ENCODE measurements at regions of chr11 and their contacts with region 1.

Region 1: GRCh38 chr11:62841361-62842184 is 2.2 kb upstream of the WDR74 start:
- DNase-seq: peak; percentile 54 to 94 (median 86)
- ATAC-seq: peak; percentile 57 to 61
- H3K4me3 Mint-ChIP-seq: no peak overlapping the region
- H3K27ac Mint-ChIP-seq: no peak overlapping the region
- H3K4me1 Mint-ChIP-seq: peaks cover 13 to 31% (median 25%) of the 10 kb centered on the region in 4 donors
- H3K27me3 Mint-ChIP-seq: no peaks in the 10 kb centered on the region

Region 2: GRCh38 chr11:62612366-62613290 is 228.9 kb before region 1 on chr11 and contains the starts of genes EML3 and ROM1:
- POLR2A ChIA-PET with region 1: interaction called, 23 read pairs
- DNase-seq: peak; percentile 79 to 94 (median 88)
- ATAC-seq: peak; percentile 74 to 78
- H3K4me3 Mint-ChIP-seq: peak within 1 kb of the TSS; percentile 91 to 98 (median 94)
- H3K27ac Mint-ChIP-seq: peak within 1 kb of the TSS; percentile 96 to 99 (median 98)
- H3K4me1 Mint-ChIP-seq: peaks cover 32 to 59% (median 57%) of the 10 kb centered on the region in 4 donors
- H3K27me3 Mint-ChIP-seq: no peaks in the 10 kb centered on the region
- polyA plus RNA-seq, gene EML3: 14.8 to 23.7 (median 15.7) TPM
- polyA plus RNA-seq, gene ROM1: 0.82 to 1.9 (median 1.8) TPM

Region 3: GRCh38 chr11:62753736-62754603 is 87.6 kb before region 1 on chr11 and contains the start of gene ZBTB3:
- POLR2A ChIA-PET with region 1: interaction called, 103 read pairs
- DNase-seq: peak; percentile 93 to 100 (median 96)
- ATAC-seq: peak; percentile 95 to 96
- H3K4me3 Mint-ChIP-seq: peak within 1 kb of the TSS; percentile 91 to 100 (median 97)
- H3K27ac Mint-ChIP-seq: peak within 1 kb of the TSS; percentile 88 to 100 (median 99)
- H3K4me1 Mint-ChIP-seq: peaks cover 8 to 43% (median 28%) of the 10 kb centered on the region in 4 donors
- H3K27me3 Mint-ChIP-seq: no peaks in the 10 kb centered on the region
- polyA plus RNA-seq, gene ZBTB3: 2.1 to 6.7 (median 3.6) TPM

Region 4: GRCh38 chr11:62787005-62787759 is 54.4 kb before region 1 on chr11 and contains the start of gene TMEM179B:
- POLR2A ChIA-PET with region 1: interaction called, 314 read pairs
- DNase-seq: peak; percentile 90 to 99 (median 97)
- ATAC-seq: peak; percentile 69 to 73
- H3K4me3 Mint-ChIP-seq: peak within 1 kb of the TSS; percentile 90 to 96 (median 96)
- H3K27ac Mint-ChIP-seq: peak within 1 kb of the TSS; percentile 92 to 98 (median 96)
- H3K4me1 Mint-ChIP-seq: peaks cover 14 to 53% (median 46%) of the 10 kb centered on the region in 4 donors
- H3K27me3 Mint-ChIP-seq: no peaks in the 10 kb centered on the region
- polyA plus RNA-seq, gene TMEM179B: 109 to 126 (median 122) TPM

Region 5: DNA sequence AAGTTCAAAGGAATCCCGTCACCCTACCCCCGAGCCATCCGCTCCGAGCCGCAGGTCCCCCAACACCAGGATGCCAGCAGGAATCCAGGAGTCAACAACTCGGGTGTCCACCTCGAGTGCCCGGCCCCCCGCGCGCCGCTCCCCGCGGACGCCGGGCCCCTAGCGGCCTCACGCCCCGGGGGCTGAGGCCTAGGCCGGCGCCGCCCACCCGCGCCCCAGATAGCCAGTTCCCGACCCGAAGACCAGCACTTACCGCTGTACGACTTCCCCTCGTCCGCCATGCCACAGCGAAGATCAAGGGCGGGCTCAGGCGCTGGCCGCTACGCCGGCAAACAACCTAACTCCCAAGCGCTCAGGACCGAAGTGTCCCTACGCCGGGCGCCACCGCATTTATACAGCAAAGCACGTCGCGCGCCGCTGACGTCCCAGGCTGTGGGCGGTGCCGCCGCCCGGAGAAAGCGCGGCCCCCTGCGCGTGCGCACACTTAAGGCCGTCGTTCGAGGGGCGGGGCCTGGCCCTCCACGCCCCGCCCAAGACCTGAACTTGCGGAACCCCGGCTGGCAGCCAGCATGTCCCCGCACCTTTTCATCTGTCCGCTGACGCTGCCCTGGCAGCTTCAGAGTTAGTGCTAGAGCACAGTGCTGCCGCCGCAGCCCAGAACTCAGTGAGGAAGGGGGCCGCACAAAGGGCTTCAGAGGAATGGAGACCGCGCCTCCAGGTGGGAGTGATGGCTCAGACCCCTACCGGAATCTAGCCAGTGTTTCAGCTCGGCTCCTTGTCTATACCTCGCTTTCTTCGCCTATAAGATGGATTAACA is 36.3 kb before region 1 on chr11 and contains the start of gene NXF1:
- POLR2A ChIA-PET with region 1: interaction called, 45 read pairs
- DNase-seq: peak; percentile 90 to 98 (median 97)
- ATAC-seq: peak; percentile 85 to 86
- H3K4me3 Mint-ChIP-seq: peak within 1 kb of the TSS; percentile 93 to 100 (median 99)
- H3K27ac Mint-ChIP-seq: peak within 1 kb of the TSS; percentile 94 to 100 (median 98)
- H3K4me1 Mint-ChIP-seq: peaks cover 11 to 40% (median 29%) of the 10 kb centered on the region in 4 donors
- H3K27me3 Mint-ChIP-seq: no peaks in the 10 kb centered on the region
- polyA plus RNA-seq, gene NXF1: 38.4 to 82.9 (median 62.8) TPM

Region 6: DNA sequence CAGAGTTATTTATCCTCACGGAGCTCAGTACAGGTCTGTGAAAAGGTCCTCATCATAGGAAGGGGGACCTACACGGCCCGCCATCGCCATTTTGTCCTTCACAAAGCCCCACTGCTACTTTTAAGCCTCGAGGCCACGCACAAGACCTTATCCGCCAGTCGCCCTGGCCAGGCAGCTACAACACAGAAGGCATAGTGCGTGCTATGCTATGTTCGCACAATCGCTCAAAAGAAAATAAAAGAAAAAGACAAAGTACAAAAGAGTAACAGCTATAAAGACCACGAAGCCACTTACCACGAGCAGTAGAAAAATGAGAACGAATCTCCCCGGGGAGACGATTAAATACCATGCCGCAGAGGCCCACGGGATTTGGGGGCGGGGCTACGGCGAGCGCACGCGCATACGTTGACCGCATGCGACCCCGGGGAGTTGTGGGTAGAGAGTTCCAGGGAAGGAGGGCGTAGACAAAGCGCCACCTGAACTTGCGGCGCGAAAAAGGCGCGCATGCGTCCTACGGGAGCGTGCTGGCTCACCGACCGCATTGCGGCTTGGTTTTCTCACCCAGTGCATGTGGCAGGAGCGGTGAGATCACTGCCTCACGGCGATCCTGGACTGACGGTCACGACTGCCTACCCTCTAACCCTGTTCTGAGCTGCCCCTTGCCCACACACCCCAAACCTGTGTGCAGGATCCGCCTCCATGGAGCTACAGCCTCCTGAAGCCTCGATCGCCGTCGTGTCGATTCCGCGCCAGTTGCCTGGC is 14.2 kb after region 1 on chr11:
- POLR2A ChIA-PET with region 1: interaction called, 479 read pairs
- DNase-seq: peak; percentile 94 to 99 (median 98)
- ATAC-seq: peak; percentile 87 to 90
- H3K4me3 Mint-ChIP-seq: peak overlapping the region; percentile 95 to 99 (median 98)
- H3K27ac Mint-ChIP-seq: peak overlapping the region; percentile 88 to 99 (median 98)
- H3K4me1 Mint-ChIP-seq: peaks cover 33 to 54% (median 52%) of the 10 kb centered on the region in 4 donors
- H3K27me3 Mint-ChIP-seq: peaks cover 0 to 4% (median 0%) of the 10 kb centered on the region in 5 donors

Region 7: GRCh38 chr11:62880803-62881578 is 39.4 kb after region 1 on chr11 and contains the start of gene SLC3A2:
- POLR2A ChIA-PET with region 1: interaction called, 68 read pairs
- DNase-seq: peak; percentile 77 to 90 (median 84)
- ATAC-seq: peak; percentile 81 to 82
- H3K4me3 Mint-ChIP-seq: peak within 1 kb of the TSS; percentile 96 to 100 (median 99)
- H3K27ac Mint-ChIP-seq: peak within 1 kb of the TSS; percentile 97 to 100 (median 100)
- H3K4me1 Mint-ChIP-seq: peaks cover 33 to 53% (median 51%) of the 10 kb centered on the region in 4 donors
- H3K27me3 Mint-ChIP-seq: no peaks in the 10 kb centered on the region
- polyA plus RNA-seq, gene SLC3A2: 119 to 164 (median 125) TPM